Common myeloid progenitor, CD34-positive (primary cell): ENCODE measurements at regions of chr10 and their contacts with region 1.

Region 1: DNA sequence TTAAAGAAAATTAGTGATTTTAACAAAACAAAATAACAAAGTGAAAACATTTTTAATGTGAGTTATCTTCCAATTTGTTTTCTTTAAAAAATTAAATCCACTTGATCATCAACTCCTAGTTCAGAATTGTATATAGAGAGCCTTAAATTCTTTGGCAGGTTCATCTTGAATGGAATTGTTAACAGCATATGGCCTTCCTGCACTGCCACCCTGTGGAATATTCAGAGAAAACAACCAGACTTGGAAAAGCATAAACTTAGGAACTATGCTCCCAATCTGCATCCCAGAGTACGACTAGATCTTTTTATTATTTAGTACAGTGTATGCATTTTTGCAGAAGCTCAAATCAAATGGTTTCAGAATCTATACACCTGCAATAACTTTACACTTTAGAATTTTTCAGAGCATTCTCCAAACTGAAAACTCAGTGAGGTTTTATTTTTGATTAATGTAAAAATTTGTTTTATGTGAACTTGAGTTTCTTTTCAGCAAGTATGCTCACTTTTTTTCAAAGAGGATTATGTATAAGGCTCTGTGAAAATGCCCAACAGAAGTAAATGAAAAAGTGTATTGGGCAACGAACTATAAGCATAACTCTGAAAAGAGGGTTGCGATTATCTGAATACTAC is 44.9 kb upstream of the ANK3 start:
- DNase-seq: peak; percentile 42 to 57 (median 46)
- H3K4me3 ChIP-seq: no peak overlapping the region
- H3K27ac ChIP-seq: no peak overlapping the region
- H3K4me1 ChIP-seq: no peaks in the 10 kb centered on the region
- H3K27me3 ChIP-seq: no peaks in the 10 kb centered on the region

Region 2: GRCh38 chr10:60099998-60100747 is 334.4 kb before region 1 on chr10:
- CTCF ChIA-PET with region 1: interaction called, 12 read pairs
- POLR2A ChIA-PET with region 1: no interaction called
- DNase-seq: peak; percentile 79 to 83 (median 83)
- H3K4me3 ChIP-seq: no peak overlapping the region
- H3K27ac ChIP-seq: no peak overlapping the region
- H3K4me1 ChIP-seq: no peaks in the 10 kb centered on the region
- H3K27me3 ChIP-seq: no peaks in the 10 kb centered on the region

Region 3: GRCh38 chr10:60114765-60115586 is 319.6 kb before region 1 on chr10:
- CTCF ChIA-PET with region 1: interaction called, 10 read pairs
- POLR2A ChIA-PET with region 1: no interaction called
- DNase-seq: peak; percentile 63 to 84 (median 83)
- H3K4me3 ChIP-seq: no peak overlapping the region
- H3K27ac ChIP-seq: no peak overlapping the region
- H3K4me1 ChIP-seq: peaks cover 0 to 5% (median 2%) of the 10 kb centered on the region in 4 experiments
- H3K27me3 ChIP-seq: no peaks in the 10 kb centered on the region

Region 4: GRCh38 chr10:60454336-60454735 is 19.8 kb after region 1 on chr10:
- CTCF ChIA-PET with region 1: no interaction called
- POLR2A ChIA-PET with region 1: no interaction called
- DNase-seq: no peak
- H3K4me3 ChIP-seq: no peak overlapping the region
- H3K27ac ChIP-seq: no peak overlapping the region
- H3K4me1 ChIP-seq: no peaks in the 10 kb centered on the region
- H3K27me3 ChIP-seq: no peaks in the 10 kb centered on the region